PC-3 (cell line): ENCODE measurements at regions of chr20 and their contacts with region 1.

Region 1: GRCh38 chr20:34834459-34834893 is 9.0 kb upstream of the NCOA6 start:
- DNase-seq: peak; percentile 86
- ATAC-seq: peak; percentile 84
- H3K4me3 ChIP-seq: peak overlapping the region; percentile 62
- H3K27ac ChIP-seq: no peak overlapping the region
- H3K4me1 ChIP-seq: no peaks in the 10 kb centered on the region
- H3K27me3 ChIP-seq: peaks cover 13% of the 10 kb centered on the region; the same call in 1 of the 2 replicates
- CTCF ChIP-seq: peak; percentile 72

Region 2: GRCh38 chr20:34806255-34806654 is 28.2 kb before region 1 on chr20:
- CTCF ChIA-PET with region 1: interaction called, 5 read pairs
- POLR2A ChIA-PET with region 1: interaction called, 10 read pairs
- intact Hi-C with region 1: no loop called
- DNase-seq: no peak
- ATAC-seq: no peak
- H3K4me3 ChIP-seq: no peak overlapping the region
- H3K27ac ChIP-seq: no peak overlapping the region
- H3K4me1 ChIP-seq: no peaks in the 10 kb centered on the region
- H3K27me3 ChIP-seq: no peaks in the 10 kb centered on the region
- CTCF ChIP-seq: no peak

Region 3: DNA sequence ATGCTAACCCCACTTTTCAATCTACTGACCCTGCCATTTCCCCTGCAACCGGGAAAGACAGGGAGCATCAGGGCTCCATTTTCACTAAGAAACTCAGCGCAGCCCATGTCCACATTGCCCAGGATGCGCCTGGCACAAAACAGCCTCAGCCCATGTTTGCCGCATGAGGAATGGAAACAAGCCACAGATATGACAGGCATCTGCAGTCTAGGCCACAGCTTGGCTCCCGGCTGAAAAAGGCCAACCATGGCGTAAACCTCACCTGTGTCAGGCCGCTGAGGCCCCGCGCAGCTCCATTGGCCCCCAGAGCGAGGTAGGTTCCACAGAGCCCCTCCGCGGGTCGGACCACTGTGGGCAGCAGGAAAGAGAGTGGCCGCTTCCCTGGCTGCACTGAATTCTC is 16.5 kb after region 1 on chr20:
- CTCF ChIA-PET with region 1: no interaction called
- POLR2A ChIA-PET with region 1: interaction called, 39 read pairs
- intact Hi-C with region 1: no loop called
- DNase-seq: no peak
- ATAC-seq: no peak
- H3K4me3 ChIP-seq: no peak overlapping the region
- H3K27ac ChIP-seq: no peak overlapping the region
- H3K4me1 ChIP-seq: no peaks in the 10 kb centered on the region
- H3K27me3 ChIP-seq: no peaks in the 10 kb centered on the region
- CTCF ChIP-seq: no peak

Region 4: GRCh38 chr20:34876162-34877001 is 41.9 kb after region 1 on chr20 and contains the start of gene ACSS2:
- CTCF ChIA-PET with region 1: interaction called, 3 read pairs
- POLR2A ChIA-PET with region 1: no interaction called
- intact Hi-C with region 1: loop called (anchors 1 kb)
- DNase-seq: peak; percentile 98
- ATAC-seq: peak; percentile 85
- H3K4me3 ChIP-seq: peak within 1 kb of the TSS; percentile 84
- H3K27ac ChIP-seq: peak within 1 kb of the TSS; percentile 52
- H3K4me1 ChIP-seq: peaks cover 20% of the 10 kb centered on the region
- H3K27me3 ChIP-seq: no peaks in the 10 kb centered on the region
- CTCF ChIP-seq: no peak
- total RNA-seq, gene ACSS2: 78.9 and 125 TPM in 2 replicates

Region 5: DNA sequence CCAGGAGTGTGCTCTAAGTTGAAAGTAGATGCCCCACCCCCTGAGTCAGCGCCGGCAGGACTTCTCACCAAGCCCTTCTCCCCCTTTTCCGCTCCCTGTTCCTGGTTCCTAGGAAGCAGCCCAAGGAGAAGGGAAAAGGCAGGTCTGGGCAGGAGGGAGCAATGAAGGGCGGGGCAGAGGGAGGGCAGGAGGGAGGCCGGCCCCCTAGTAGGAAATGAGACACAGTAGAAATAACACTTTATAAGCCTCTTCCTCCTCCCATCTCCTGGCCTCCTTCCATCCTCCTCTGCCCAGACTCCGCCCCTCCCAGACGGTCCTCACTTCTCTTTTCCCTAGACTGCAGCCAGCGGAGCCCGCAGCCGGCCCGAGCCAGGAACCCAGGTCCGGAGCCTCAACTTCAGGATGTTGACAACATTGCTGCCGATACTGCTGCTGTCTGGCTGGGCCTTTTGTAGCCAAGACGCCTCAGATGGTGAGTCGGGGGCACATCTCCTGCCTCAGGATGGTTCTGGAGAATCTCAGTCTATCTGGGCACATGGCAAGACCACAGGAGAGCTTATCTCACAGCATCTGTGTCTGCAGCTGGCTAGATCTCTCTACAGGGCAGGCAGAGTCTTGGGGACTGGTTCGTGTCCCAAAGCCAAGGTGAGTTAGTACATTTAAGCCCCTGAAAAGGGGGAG is 337.4 kb after region 1 on chr20 and contains the start of gene PROCR:
- CTCF ChIA-PET with region 1: no interaction called
- POLR2A ChIA-PET with region 1: no interaction called
- intact Hi-C with region 1: no loop called
- DNase-seq: peak; percentile 97
- ATAC-seq: peak; percentile 97
- H3K4me3 ChIP-seq: peak within 1 kb of the TSS; percentile 72
- H3K27ac ChIP-seq: no peak within 1 kb of the TSS
- H3K4me1 ChIP-seq: peaks cover 19% of the 10 kb centered on the region
- H3K27me3 ChIP-seq: no peaks in the 10 kb centered on the region
- CTCF ChIP-seq: no peak
- total RNA-seq, gene PROCR: 45.4 and 55.7 TPM in 2 replicates

Region 6: GRCh38 chr20:35207950-35208611 is 373.6 kb after region 1 on chr20:
- CTCF ChIA-PET with region 1: no interaction called
- POLR2A ChIA-PET with region 1: no interaction called
- intact Hi-C with region 1: loop called (anchors 5 kb)
- DNase-seq: peak; percentile 86
- ATAC-seq: peak; percentile 98
- H3K4me3 ChIP-seq: peak overlapping the region; percentile 32; the same call in 1 of the 2 replicates
- H3K27ac ChIP-seq: no peak overlapping the region
- H3K4me1 ChIP-seq: no peaks in the 10 kb centered on the region
- H3K27me3 ChIP-seq: no peaks in the 10 kb centered on the region
- CTCF ChIP-seq: peak; percentile 93

Region 7: GRCh38 chr20:35269055-35269781 is 434.7 kb after region 1 on chr20:
- CTCF ChIA-PET with region 1: no interaction called
- POLR2A ChIA-PET with region 1: no interaction called
- intact Hi-C with region 1: loop called (anchors 10 kb)
- DNase-seq: peak; percentile 67
- ATAC-seq: peak; percentile 80
- H3K4me3 ChIP-seq: no peak overlapping the region
- H3K27ac ChIP-seq: no peak overlapping the region
- H3K4me1 ChIP-seq: peaks cover 5% of the 10 kb centered on the region
- H3K27me3 ChIP-seq: no peaks in the 10 kb centered on the region
- CTCF ChIP-seq: peak; percentile 94